ENCODE measurements at regions of chr7 and their contacts with region 1.

Region 1: GRCh38 chr7:86978808-86979506 is 80.5 kb downstream of the ELAPOR2 start:
- DNase-seq: peak in 3 of 9 experiments; percentile 26 to 85 (median 75)
- ATAC-seq: peak; percentile 90
- H3K4me3 ChIP-seq: no peak overlapping the region
- H3K4me3 Mint-ChIP-seq: peak overlapping the region; percentile 46
- H3K27ac ChIP-seq: peak overlapping the region; percentile 28 to 51
- H3K27ac Mint-ChIP-seq: peak overlapping the region; percentile 91
- H3K4me1 ChIP-seq: peaks cover 27% of the 10 kb centered on the region
- H3K4me1 Mint-ChIP-seq: peaks cover 41% of the 10 kb centered on the region
- H3K27me3 ChIP-seq: no peaks in the 10 kb centered on the region
- H3K27me3 Mint-ChIP-seq: no peaks in the 10 kb centered on the region
- CTCF ChIP-seq: no peak

Region 2: GRCh38 chr7:86939197-86939814 is 39.7 kb before region 1 on chr7:
- CTCF ChIA-PET with region 1: no interaction called
- POLR2A ChIA-PET with region 1: no interaction called
- intact Hi-C with region 1: loop called (anchors 5 kb)
- DNase-seq: peak in 5 of 9 experiments; percentile 4 to 67 (median 39)
- ATAC-seq: peak; percentile 63
- H3K4me3 ChIP-seq: no peak overlapping the region
- H3K4me3 Mint-ChIP-seq: no peak overlapping the region
- H3K27ac ChIP-seq: no peak overlapping the region
- H3K27ac Mint-ChIP-seq: no peak overlapping the region
- H3K4me1 ChIP-seq: no peaks in the 10 kb centered on the region
- H3K4me1 Mint-ChIP-seq: no peaks in the 10 kb centered on the region
- H3K27me3 ChIP-seq: no peaks in the 10 kb centered on the region
- H3K27me3 Mint-ChIP-seq: peaks cover 8% of the 10 kb centered on the region
- CTCF ChIP-seq: peak; percentile 41

Region 3: GRCh38 chr7:87001214-87001613 is 22.3 kb after region 1 on chr7:
- CTCF ChIA-PET with region 1: interaction called, 4 read pairs
- POLR2A ChIA-PET with region 1: interaction called, 3 read pairs
- intact Hi-C with region 1: loop called in 1 of 2 experiments (anchors 1 kb)
- DNase-seq: no peak
- ATAC-seq: no peak
- H3K4me3 ChIP-seq: no peak overlapping the region
- H3K4me3 Mint-ChIP-seq: no peak overlapping the region
- H3K27ac ChIP-seq: no peak overlapping the region
- H3K27ac Mint-ChIP-seq: no peak overlapping the region
- H3K4me1 ChIP-seq: no peaks in the 10 kb centered on the region
- H3K4me1 Mint-ChIP-seq: peaks cover 2% of the 10 kb centered on the region
- H3K27me3 ChIP-seq: no peaks in the 10 kb centered on the region
- H3K27me3 Mint-ChIP-seq: peaks cover 14% of the 10 kb centered on the region
- CTCF ChIP-seq: no peak

Region 4: DNA sequence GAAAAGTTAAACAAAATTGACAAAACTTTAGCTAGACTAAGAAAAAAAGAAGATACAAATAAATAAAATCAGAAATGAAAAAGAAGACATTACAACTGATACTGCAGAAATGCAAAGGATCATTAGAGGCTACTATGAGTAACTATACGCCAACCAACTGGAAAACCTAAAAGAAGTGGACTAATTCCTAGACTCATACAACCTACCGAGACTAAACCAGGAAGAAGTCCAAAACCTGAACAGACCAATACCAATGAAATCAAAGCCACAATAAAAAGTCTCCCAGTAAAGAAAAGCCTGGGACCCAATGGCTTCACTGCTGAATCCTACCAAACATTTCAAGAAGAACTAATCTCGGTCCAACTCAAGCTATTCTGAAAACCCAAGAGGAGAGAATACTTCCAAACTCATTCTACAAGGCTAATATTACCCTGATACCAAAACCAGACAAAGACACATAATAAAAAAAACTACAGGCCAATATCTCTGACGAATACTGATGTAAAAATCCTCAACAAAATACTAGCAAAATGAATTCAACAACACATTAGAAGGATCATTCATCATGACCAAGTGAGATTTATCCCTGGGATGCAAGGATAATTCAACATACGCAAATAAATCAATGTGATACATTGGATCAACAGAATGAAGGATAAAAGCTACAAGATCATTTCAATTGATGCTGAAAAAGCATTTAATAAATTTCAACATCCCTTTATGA is 60.2 kb after region 1 on chr7:
- CTCF ChIA-PET with region 1: no interaction called
- POLR2A ChIA-PET with region 1: no interaction called
- intact Hi-C with region 1: loop called in 1 of 2 experiments (anchors 10 kb)
- DNase-seq: no peak
- ATAC-seq: no peak
- H3K4me3 ChIP-seq: peak overlapping the region in 1 of 2 experiments; percentile 40
- H3K4me3 Mint-ChIP-seq: peak overlapping the region; percentile 64
- H3K27ac ChIP-seq: peak overlapping the region in 1 of 2 experiments; percentile 55
- H3K27ac Mint-ChIP-seq: no peak overlapping the region
- H3K4me1 ChIP-seq: no peaks in the 10 kb centered on the region
- H3K4me1 Mint-ChIP-seq: no peaks in the 10 kb centered on the region
- H3K27me3 ChIP-seq: no peaks in the 10 kb centered on the region
- H3K27me3 Mint-ChIP-seq: peaks cover 3% of the 10 kb centered on the region
- CTCF ChIP-seq: no peak

Region 5: GRCh38 chr7:87059525-87060287 is 80.7 kb after region 1 on chr7 and contains the start of gene ELAPOR2:
- CTCF ChIA-PET with region 1: interaction called, 3 read pairs
- POLR2A ChIA-PET with region 1: interaction called, 5 read pairs
- intact Hi-C with region 1: loop called in 1 of 2 experiments (anchors 5 kb)
- DNase-seq: peak; percentile 64 to 89 (median 80)
- ATAC-seq: peak; percentile 94
- H3K4me3 ChIP-seq: peak within 1 kb of the TSS; percentile 43 to 62
- H3K4me3 Mint-ChIP-seq: peak within 1 kb of the TSS; percentile 87
- H3K27ac ChIP-seq: peak within 1 kb of the TSS; percentile 16 to 38
- H3K27ac Mint-ChIP-seq: peak within 1 kb of the TSS; percentile 77
- H3K4me1 ChIP-seq: peaks cover 10% of the 10 kb centered on the region
- H3K4me1 Mint-ChIP-seq: peaks cover 16% of the 10 kb centered on the region
- H3K27me3 ChIP-seq: no peaks in the 10 kb centered on the region
- H3K27me3 Mint-ChIP-seq: peaks cover 5% of the 10 kb centered on the region
- CTCF ChIP-seq: no peak
- total RNA-seq, gene ELAPOR2: 5.1 to 5.7 TPM

Region 6: DNA sequence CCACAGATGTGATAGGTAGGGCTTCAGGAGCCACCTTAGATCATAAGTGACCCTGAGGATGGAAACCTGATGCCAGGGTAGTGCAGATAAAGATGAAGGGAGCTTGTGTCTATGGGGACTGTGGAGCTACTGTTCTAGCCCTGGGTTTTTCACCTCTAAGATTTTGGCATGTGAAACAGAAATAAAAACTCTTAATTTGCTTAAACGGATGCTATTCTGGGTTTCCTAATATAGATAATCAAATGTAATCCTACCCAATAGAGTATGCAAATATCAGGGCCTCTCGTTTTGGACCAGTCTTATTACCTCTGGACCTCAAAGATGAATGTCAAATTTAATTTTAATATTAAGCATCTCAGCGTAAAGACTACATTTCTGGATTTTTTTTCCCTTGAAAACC is 447.2 kb after region 1 on chr7:
- CTCF ChIA-PET with region 1: no interaction called
- POLR2A ChIA-PET with region 1: no interaction called
- intact Hi-C with region 1: no loop called
- DNase-seq: no peak
- ATAC-seq: no peak
- H3K4me3 ChIP-seq: no peak overlapping the region
- H3K4me3 Mint-ChIP-seq: no peak overlapping the region
- H3K27ac ChIP-seq: no peak overlapping the region
- H3K27ac Mint-ChIP-seq: no peak overlapping the region
- H3K4me1 ChIP-seq: no peaks in the 10 kb centered on the region
- H3K4me1 Mint-ChIP-seq: no peaks in the 10 kb centered on the region
- H3K27me3 ChIP-seq: no peaks in the 10 kb centered on the region
- H3K27me3 Mint-ChIP-seq: peaks cover 12% of the 10 kb centered on the region
- CTCF ChIP-seq: no peak